H1 (cell line): ENCODE measurements at regions of chr17 and their contacts with region 1.

Region 1: DNA sequence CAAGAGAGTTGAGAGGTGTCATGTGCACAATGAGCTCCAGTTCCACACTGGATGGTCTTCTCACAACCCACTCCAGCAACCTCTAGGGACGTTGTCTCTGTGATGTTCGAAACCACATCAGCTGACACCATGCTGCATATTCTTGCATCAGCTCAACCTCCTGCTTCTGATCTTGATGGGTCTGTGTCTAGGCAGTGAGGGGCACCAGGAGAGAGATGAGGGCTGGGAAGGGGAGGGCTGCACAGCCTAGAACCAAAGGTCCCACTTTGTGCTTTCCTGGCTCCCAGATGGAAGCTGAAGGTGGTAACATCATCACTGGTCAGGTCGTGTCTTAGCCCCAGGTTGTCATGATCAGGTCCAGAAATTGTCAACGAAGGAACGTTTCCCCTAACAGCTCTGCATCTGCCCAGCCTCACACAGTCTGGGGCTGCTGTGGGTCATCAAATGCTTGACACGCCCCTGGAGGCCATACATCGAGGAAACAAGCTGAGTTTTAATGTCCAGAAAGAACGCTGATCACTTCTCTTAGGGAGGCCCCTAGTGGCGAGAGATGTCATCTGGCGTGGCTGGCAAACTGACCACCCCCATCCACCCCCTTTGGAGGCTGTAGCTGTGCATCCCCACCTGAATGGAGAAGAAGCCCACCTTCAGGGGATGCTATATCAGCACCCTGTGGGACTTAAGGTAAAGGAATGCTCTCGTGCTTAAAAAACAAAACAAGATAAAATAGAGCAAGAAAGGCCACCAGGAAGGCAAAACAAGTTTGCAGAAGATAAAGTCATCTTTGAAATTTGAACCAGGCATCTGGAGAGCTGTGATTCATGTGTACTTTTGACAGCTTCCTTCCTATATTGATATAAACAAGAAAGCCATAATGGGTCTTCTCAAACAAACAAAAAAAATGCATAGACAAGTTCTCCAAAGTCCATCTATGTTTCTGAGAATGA is 58.3 kb downstream of the WIPI1 start:
- DNase-seq: peak in 1 of 2 experiments; percentile 79
- H3K4me3 ChIP-seq: no peak overlapping the region
- H3K27ac ChIP-seq: no peak overlapping the region
- H3K4me1 ChIP-seq: peaks cover 0 to 2% (median 0%) of the 10 kb centered on the region in 4 experiments; a peak in 1 of 7 replicates
- H3K27me3 ChIP-seq: no peaks in the 10 kb centered on the region
- CTCF ChIP-seq: peak; percentile 83 to 92 (median 92)
- EP300 ChIP-seq: no peak
- POLR2A ChIP-seq: no peak
- RAD21 ChIP-seq: peak; percentile 84 to 91

Region 2: GRCh38 chr17:67974598-67975066 is 424.3 kb before region 1 on chr17:
- CTCF ChIA-PET with region 1: no interaction called
- POLR2A ChIA-PET with region 1: no interaction called
- DNase-seq: peak; percentile 72 to 87
- H3K4me3 ChIP-seq: peak overlapping the region; percentile 70 to 87 (median 78)
- H3K27ac ChIP-seq: peak overlapping the region; percentile 95
- H3K4me1 ChIP-seq: peaks cover 0 to 7% (median 2%) of the 10 kb centered on the region in 4 experiments; a peak in 4 of 7 replicates
- H3K27me3 ChIP-seq: no peaks in the 10 kb centered on the region
- CTCF ChIP-seq: peak in 1 of 3 experiments; percentile 6; a peak in 1 of 4 replicates
- EP300 ChIP-seq: peak in 1 of 2 experiments; percentile 27; a peak in 1 of 3 replicates
- POLR2A ChIP-seq: peak; percentile 45 to 89
- RAD21 ChIP-seq: no peak

Region 3: DNA sequence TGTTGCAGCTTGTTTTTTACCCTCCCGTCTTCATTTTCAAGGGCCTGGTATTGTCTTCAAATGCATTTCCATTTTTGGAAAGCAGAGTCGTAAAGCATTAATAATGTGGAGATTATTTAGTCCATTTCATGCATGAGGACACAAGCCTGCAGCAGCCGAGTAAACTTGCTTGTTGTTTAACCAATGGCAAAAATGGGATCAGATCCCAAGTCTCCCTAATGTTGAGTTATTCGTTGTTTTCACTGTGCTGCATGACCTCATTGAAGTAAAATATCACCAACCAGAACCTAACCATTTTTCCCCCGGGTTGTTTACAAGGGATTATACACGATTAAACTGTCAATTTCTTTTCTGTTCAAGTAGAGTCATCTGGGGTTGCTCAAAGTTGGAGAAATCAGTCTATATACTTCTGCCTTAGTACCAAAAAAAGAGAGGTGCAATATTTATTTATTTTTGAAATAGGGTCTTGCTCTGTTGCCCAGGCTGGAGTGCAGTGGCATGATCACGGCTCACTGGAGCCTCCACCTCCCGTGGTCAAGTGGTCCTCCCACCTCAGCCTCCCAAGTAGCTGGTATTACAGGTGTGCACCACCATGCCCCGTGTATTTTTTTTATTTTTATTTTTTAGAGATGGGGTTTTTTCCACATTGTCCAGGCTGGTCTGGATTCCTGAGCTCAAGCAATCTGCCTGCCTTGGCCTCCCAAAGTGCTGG is 138.8 kb before region 1 on chr17:
- CTCF ChIA-PET with region 1: interaction called, 98 read pairs
- POLR2A ChIA-PET with region 1: no interaction called
- DNase-seq: no peak
- H3K4me3 ChIP-seq: no peak overlapping the region
- H3K27ac ChIP-seq: no peak overlapping the region
- H3K4me1 ChIP-seq: peaks cover 0 to 6% (median under 1%) of the 10 kb centered on the region in 4 experiments; a peak in 2 of 7 replicates
- H3K27me3 ChIP-seq: 0 out of 7 replicates have a peak, but pooled peaks cover 0 to 3% (median 0%) of the 10 kb centered on the region in 4 experiments
- CTCF ChIP-seq: no peak
- EP300 ChIP-seq: no peak
- POLR2A ChIP-seq: no peak
- RAD21 ChIP-seq: no peak

Region 4: GRCh38 chr17:68319410-68320162 is 79.4 kb before region 1 on chr17:
- CTCF ChIA-PET with region 1: interaction called, 42 read pairs
- POLR2A ChIA-PET with region 1: no interaction called
- DNase-seq: no peak
- H3K4me3 ChIP-seq: no peak overlapping the region
- H3K27ac ChIP-seq: no peak overlapping the region
- H3K4me1 ChIP-seq: peaks cover 0 to 7% (median 3%) of the 10 kb centered on the region in 4 experiments; a peak in 4 of 7 replicates
- H3K27me3 ChIP-seq: no peaks in the 10 kb centered on the region
- CTCF ChIP-seq: no peak
- EP300 ChIP-seq: no peak
- POLR2A ChIP-seq: no peak
- RAD21 ChIP-seq: no peak

Region 5: GRCh38 chr17:68344701-68345136 is 54.2 kb before region 1 on chr17:
- CTCF ChIA-PET with region 1: interaction called, 11 read pairs
- POLR2A ChIA-PET with region 1: no interaction called
- DNase-seq: no peak
- H3K4me3 ChIP-seq: no peak overlapping the region
- H3K27ac ChIP-seq: no peak overlapping the region
- H3K4me1 ChIP-seq: peaks cover 0 to 2% (median 0%) of the 10 kb centered on the region in 4 experiments; a peak in 1 of 7 replicates
- H3K27me3 ChIP-seq: no peaks in the 10 kb centered on the region
- CTCF ChIP-seq: no peak
- EP300 ChIP-seq: no peak
- POLR2A ChIP-seq: no peak
- RAD21 ChIP-seq: no peak

Region 6: DNA sequence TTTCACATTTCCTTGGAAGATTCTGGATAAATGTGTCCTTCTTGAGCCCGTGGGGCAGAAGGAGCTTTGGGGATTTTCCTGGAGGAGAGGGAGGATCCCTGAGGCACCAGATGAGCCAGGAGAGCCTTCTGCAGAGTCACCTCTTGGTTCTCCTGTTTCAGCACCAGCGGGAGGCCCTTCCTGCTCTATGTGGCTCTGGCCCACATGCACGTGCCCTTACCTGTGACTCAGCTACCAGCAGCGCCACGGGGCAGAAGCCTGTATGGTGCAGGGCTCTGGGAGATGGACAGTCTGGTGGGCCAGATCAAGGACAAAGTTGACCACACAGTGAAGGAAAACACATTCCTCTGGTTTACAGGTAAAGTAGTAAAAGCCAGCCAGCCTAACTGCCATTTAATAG is 30.6 kb before region 1 on chr17:
- CTCF ChIA-PET with region 1: interaction called, 10 read pairs
- POLR2A ChIA-PET with region 1: no interaction called
- DNase-seq: no peak
- H3K4me3 ChIP-seq: no peak overlapping the region
- H3K27ac ChIP-seq: no peak overlapping the region; the same call in 1 of the 2 replicates
- H3K4me1 ChIP-seq: peaks cover 0 to 3% (median 0%) of the 10 kb centered on the region in 4 experiments; a peak in 1 of 7 replicates
- H3K27me3 ChIP-seq: no peaks in the 10 kb centered on the region
- CTCF ChIP-seq: no peak
- EP300 ChIP-seq: no peak
- POLR2A ChIP-seq: no peak
- RAD21 ChIP-seq: no peak

Region 7: GRCh38 chr17:68386240-68387087 is 12.5 kb before region 1 on chr17:
- CTCF ChIA-PET with region 1: interaction called, 41 read pairs
- POLR2A ChIA-PET with region 1: interaction called, 5 read pairs
- DNase-seq: no peak
- H3K4me3 ChIP-seq: no peak overlapping the region
- H3K27ac ChIP-seq: no peak overlapping the region
- H3K4me1 ChIP-seq: no peaks in the 10 kb centered on the region
- H3K27me3 ChIP-seq: no peaks in the 10 kb centered on the region; a peak in 1 of 7 replicates
- CTCF ChIP-seq: peak in 1 of 3 experiments; percentile 28; a peak in 1 of 4 replicates
- EP300 ChIP-seq: no peak
- POLR2A ChIP-seq: no peak
- RAD21 ChIP-seq: peak in 1 of 2 experiments; percentile 19; a peak in 2 of 4 replicates

Region 8: DNA sequence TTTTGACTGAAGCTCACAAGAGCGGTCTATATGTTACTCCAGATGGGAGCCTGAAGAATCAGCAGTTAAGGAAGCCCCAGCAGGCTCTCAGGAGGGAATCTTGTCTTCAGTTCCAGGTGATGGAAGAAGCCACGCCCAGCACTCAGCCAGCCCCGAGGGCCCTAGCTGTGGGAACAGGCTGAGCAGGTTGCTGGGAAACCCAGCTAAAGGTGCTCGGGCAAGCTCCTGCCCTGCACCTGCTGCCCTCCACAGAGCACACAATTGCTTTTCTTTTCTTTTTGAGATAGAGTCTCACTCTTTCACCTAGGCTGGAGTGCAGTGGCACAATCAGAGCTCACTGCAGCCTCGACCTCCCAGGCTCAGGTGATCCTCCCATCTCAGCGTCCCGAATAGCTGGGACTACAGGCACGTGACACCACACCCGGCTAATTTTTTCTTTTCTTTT is 26.0 kb after region 1 on chr17:
- CTCF ChIA-PET with region 1: interaction called, 12 read pairs
- POLR2A ChIA-PET with region 1: no interaction called
- DNase-seq: peak in 1 of 2 experiments; percentile 57
- H3K4me3 ChIP-seq: no peak overlapping the region
- H3K27ac ChIP-seq: no peak overlapping the region
- H3K4me1 ChIP-seq: peaks cover 0 to 6% (median 4%) of the 10 kb centered on the region in 4 experiments; a peak in 5 of 7 replicates
- H3K27me3 ChIP-seq: no peaks in the 10 kb centered on the region
- CTCF ChIP-seq: no peak
- EP300 ChIP-seq: no peak
- POLR2A ChIP-seq: no peak
- RAD21 ChIP-seq: no peak